Mammary epithelial cell (primary cell): ENCODE measurements at regions of chr22 and their contacts with region 1.

Region 1: DNA sequence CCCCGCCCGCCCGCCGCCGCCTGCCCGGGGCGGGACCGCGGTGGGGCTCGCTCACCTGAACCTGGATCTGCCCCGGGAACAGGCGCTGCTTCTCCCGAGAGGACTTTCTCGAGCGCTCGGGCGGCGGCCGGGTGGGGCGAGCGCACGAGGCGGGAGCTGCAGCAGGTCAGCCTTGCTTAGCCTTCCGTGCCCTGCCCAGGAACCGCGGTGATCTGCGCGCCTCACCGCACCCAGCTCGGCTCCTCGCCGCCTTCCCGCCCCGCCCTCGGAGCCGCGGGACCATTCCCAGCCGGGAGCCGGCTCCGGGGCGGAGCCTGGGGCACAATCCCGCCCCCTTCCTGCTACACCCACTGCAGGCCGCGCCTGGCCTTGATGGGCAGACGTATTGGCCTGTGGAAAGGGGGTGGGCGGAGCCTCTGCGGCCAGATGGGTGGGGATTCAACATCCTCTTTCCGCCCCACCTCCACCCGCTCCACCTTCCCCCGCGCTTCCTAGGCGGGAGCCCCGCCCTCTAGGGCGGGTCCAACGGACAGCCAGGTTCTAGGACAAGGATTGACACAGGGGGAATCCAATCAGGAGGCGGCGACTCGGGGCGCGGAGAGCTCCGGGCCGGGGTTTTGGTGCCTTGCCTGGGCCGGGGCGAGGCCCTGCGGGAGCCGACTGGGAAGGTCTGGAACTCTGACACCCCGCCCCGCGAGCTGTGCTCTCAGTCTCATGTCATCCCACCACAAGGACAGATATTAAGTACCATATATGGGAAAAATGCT is at the start of gene MYH9:
- DNase-seq: peak; percentile 100
- H3K4me3 ChIP-seq: peak within 1 kb of the TSS; percentile 56 to 90 (median 77)
- H3K27ac ChIP-seq: peak within 1 kb of the TSS; percentile 92
- H3K4me1 ChIP-seq: peaks cover 22% of the 10 kb centered on the region
- H3K27me3 ChIP-seq: no peaks in the 10 kb centered on the region
- CTCF ChIP-seq: no peak
- total RNA-seq, gene MYH9: 1,183 to 1,246 TPM

Region 2: DNA sequence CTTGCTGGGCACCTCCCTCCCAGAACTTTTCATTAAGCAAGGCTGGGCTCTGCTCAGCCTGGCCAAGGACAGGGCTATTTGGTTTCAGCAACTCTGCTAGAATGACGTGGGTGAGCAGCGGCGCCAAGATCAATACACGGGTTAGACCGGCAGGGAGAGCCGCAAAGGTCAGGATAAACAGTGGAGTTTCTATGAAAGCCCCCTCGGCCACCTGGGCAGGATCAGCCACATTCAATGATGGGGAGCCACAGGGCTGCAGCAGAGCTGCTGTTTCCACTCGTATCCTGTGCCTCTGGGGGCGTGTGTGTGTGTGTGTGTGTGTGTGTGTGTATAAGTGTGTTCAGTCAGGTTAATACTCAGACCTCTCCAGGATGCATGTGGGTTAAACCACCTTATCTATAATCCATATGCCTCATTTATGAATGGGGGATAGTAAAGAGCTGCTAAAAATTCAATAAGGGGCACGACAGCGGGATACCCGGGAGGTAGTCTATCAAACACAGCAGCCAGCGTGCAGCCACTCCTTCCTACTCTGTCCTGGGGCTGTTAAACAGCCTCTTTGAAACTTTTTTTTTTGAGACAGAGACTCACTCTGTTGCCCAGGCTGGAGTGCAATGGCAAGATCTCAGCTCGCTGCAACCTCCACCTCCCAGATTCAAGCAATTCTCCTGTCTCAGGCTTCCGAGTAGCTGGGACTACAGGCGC is 35.0 kb before region 1 on chr22:
- CTCF ChIA-PET with region 1: no interaction called
- dilution Hi-C with region 1: no loop called
- in situ Hi-C with region 1: no loop called
- intact Hi-C with region 1: loop called (anchors 1 kb)
- DNase-seq: peak; percentile 71
- H3K4me3 ChIP-seq: no peak overlapping the region
- H3K27ac ChIP-seq: peak overlapping the region; percentile 75
- H3K4me1 ChIP-seq: peaks cover 79% of the 10 kb centered on the region
- H3K27me3 ChIP-seq: no peaks in the 10 kb centered on the region
- CTCF ChIP-seq: no peak

Region 3: GRCh38 chr22:36369922-36370791 is 17.8 kb before region 1 on chr22:
- CTCF ChIA-PET with region 1: no interaction called
- dilution Hi-C with region 1: no loop called
- in situ Hi-C with region 1: no loop called
- intact Hi-C with region 1: loop called (anchors 1 kb)
- DNase-seq: peak; percentile 74
- H3K4me3 ChIP-seq: no peak overlapping the region
- H3K27ac ChIP-seq: peak overlapping the region; percentile 74
- H3K4me1 ChIP-seq: peaks cover 97% of the 10 kb centered on the region
- H3K27me3 ChIP-seq: no peaks in the 10 kb centered on the region
- CTCF ChIP-seq: no peak

Region 4: GRCh38 chr22:36398621-36399469 is 10.9 kb after region 1 on chr22:
- CTCF ChIA-PET with region 1: no interaction called
- dilution Hi-C with region 1: no loop called
- in situ Hi-C with region 1: no loop called
- intact Hi-C with region 1: loop called (anchors 1 kb)
- DNase-seq: peak; percentile 77
- H3K4me3 ChIP-seq: no peak overlapping the region
- H3K27ac ChIP-seq: peak overlapping the region; percentile 40
- H3K4me1 ChIP-seq: peaks cover 49% of the 10 kb centered on the region
- H3K27me3 ChIP-seq: no peaks in the 10 kb centered on the region
- CTCF ChIP-seq: no peak

Region 5: DNA sequence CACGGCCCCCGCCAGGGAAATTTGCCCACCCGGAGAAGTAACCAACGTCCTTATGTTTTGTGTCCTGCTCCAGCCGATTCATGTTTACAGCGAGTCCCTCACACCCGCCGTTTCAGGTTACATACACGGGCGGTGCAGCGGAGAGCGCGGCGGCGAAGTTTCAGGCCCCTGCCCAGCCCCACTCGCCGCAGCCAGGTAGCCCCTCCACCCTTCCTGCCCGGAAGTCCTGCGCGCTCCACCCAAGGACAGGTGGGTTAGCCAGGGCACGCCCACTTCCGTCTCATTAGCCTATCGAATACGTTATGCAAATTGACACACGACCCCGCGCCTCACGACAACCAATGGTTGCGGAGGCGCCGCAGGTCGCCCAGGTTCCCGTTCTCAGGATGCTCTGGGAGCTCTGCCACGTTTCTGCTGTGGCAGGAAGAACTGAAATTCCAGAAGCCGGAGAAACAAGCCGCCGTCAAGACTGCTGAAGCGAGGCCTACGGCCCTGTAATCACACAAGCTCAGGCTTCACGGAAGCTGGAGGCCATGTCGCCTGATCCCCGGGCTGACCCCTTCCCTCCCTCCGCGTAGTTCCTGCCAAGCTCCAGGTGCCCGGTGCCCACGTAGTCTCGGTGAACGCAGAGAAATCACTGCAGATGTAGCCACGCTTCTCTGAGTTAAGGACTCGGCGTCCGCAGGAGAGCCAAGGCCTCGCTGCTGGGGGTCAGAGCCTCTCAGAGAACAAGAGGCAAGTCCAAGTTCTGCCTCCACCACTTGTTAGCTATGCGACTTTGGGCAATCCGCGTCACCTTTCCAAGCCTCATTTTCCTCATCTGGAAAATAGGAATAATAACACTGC is 22.2 kb after region 1 on chr22:
- CTCF ChIA-PET with region 1: no interaction called
- dilution Hi-C with region 1: no loop called
- in situ Hi-C with region 1: no loop called
- intact Hi-C with region 1: loop called (anchors 1 kb)
- DNase-seq: peak; percentile 98
- H3K4me3 ChIP-seq: peak overlapping the region; percentile 55 to 81 (median 67)
- H3K27ac ChIP-seq: peak overlapping the region; percentile 73
- H3K4me1 ChIP-seq: peaks cover 24% of the 10 kb centered on the region
- H3K27me3 ChIP-seq: no peaks in the 10 kb centered on the region
- CTCF ChIP-seq: peak; percentile 8 to 10

Region 6: GRCh38 chr22:36417281-36417686 is 29.3 kb after region 1 on chr22:
- CTCF ChIA-PET with region 1: no interaction called
- dilution Hi-C with region 1: no loop called
- in situ Hi-C with region 1: no loop called
- intact Hi-C with region 1: loop called (anchors 1 kb)
- DNase-seq: peak; percentile 96
- H3K4me3 ChIP-seq: no peak overlapping the region
- H3K27ac ChIP-seq: peak overlapping the region; percentile 87
- H3K4me1 ChIP-seq: peaks cover 23% of the 10 kb centered on the region
- H3K27me3 ChIP-seq: no peaks in the 10 kb centered on the region
- CTCF ChIP-seq: no peak